GM12878 (cell line): ENCODE measurements at regions of chr16 and their contacts with region 1.

Region 1: GRCh38 chr16:84599521-84600202 is 18.2 kb downstream of the COTL1 start:
- DNase-seq: no peak
- ATAC-seq: peak; percentile 35
- H3K4me3 ChIP-seq: peak overlapping the region; percentile 69
- H3K27ac ChIP-seq: peak overlapping the region; percentile 100
- H3K4me1 ChIP-seq: peaks cover 79% of the 10 kb centered on the region
- H3K27me3 ChIP-seq: no peaks in the 10 kb centered on the region
- CTCF ChIP-seq: no peak
- EP300 ChIP-seq: peak in 1 of 2 experiments; percentile 18; a peak in 1 of 4 replicates
- POLR2A ChIP-seq: peak; percentile 64
- RAD21 ChIP-seq: no peak

Region 2: DNA sequence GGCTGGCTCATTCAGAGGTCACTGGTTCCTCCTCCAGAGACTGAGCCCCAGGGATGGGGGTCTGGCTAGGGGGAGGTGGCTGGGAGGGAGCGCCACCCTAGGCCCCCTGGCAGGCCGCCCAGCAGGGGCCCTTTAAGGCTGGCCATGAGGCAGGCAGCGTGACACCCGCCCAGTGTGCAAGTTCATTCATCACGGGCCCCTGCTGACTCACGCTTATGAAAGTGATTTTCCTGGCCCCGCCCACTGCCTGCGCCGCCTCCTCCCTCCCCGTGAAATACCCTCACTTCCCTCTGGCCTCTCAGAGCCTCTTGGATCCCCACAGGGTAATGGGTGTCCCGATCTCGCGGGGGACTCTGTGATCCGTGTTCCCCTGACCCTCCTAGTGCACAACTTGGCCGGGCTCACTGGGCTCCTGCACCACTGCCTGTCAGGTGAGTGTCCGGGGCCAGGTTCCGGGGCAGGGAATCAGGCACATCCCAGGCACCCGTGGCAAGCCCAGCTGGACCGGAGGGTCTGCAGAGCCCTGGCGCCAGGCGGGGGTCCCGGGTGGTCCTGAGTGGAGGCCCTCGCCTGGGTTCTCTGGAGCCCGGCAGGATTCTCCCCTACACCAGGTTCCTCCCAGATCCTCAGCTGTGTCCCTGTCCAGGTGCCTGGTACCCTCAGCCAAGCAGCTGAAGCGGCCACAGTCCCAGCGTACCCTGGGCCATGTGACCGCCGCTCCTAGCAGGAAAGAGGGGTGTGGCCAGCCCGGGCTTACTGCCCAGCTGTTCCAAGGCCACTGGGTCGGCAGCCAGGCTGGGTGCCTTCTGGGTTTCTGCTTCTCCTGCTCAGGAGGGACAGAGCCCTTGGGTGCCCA is 646.5 kb before region 1 on chr16 and contains the start of gene OSGIN1:
- CTCF ChIA-PET with region 1: no interaction called
- POLR2A ChIA-PET with region 1: no interaction called
- RAD21 ChIA-PET with region 1: no interaction called
- SMC1A ChIA-PET with region 1: no interaction called
- in situ Hi-C with region 1: loop called (anchors 10 kb)
- intact Hi-C with region 1: no loop called
- DNase-seq: peak; percentile 25
- ATAC-seq: peak; percentile 91
- H3K4me3 ChIP-seq: 0 out of 2 replicates have a peak within 1 kb of the TSS, but pooled peaks have one; percentile 16
- H3K27ac ChIP-seq: no peak within 1 kb of the TSS
- H3K4me1 ChIP-seq: peaks cover 3% of the 10 kb centered on the region; the same call in 1 of the 2 replicates
- H3K27me3 ChIP-seq: no peaks in the 10 kb centered on the region
- CTCF ChIP-seq: no peak
- EP300 ChIP-seq: no peak
- POLR2A ChIP-seq: peak; percentile 57
- RAD21 ChIP-seq: no peak
- polyA plus RNA-seq, gene OSGIN1: not detected

Region 3: DNA sequence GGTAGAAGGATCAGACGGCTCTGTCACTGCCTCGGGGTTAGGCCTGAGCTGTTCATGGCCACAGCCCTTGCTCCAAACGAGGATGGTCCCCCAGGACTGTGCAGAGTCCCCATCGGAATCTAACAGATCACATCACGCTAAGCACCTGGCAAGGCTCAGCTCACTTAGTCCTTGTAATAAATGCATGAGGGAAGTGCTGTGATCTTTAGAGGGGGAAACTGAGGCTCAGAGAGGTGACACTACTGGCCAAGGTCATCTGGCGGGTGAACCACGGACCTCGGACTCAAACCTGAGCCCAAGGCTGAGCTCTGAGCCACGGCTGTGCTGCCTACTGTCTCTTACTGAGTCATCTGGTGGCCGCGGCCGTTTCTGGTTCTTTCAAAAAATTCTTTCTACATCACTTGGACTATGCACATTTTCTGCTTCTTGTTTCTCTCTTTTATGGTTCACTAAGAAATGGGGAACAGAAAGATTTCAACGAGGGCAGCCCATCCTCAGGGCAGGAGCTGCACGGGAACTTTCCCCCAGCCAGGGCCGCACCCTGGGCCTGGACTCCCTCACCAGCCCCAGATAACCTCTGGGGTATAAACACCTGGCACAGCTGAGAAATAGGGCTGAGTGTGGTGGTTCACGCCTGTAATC is 37.4 kb before region 1 on chr16:
- CTCF ChIA-PET with region 1: interaction called, 4 read pairs
- POLR2A ChIA-PET with region 1: interaction called, 8 read pairs
- RAD21 ChIA-PET with region 1: interaction called, 11 read pairs
- SMC1A ChIA-PET with region 1: interaction called, 5 read pairs
- in situ Hi-C with region 1: no loop called
- intact Hi-C with region 1: no loop called
- DNase-seq: peak; percentile 64
- ATAC-seq: peak; percentile 92
- H3K4me3 ChIP-seq: no peak overlapping the region
- H3K27ac ChIP-seq: peak overlapping the region; percentile 66
- H3K4me1 ChIP-seq: peaks cover 21% of the 10 kb centered on the region
- H3K27me3 ChIP-seq: no peaks in the 10 kb centered on the region
- CTCF ChIP-seq: no peak
- EP300 ChIP-seq: peak in 1 of 2 experiments; percentile 6; a peak in 1 of 4 replicates
- POLR2A ChIP-seq: no peak; the same call in 1 of the 2 replicates
- RAD21 ChIP-seq: no peak

Region 4: DNA sequence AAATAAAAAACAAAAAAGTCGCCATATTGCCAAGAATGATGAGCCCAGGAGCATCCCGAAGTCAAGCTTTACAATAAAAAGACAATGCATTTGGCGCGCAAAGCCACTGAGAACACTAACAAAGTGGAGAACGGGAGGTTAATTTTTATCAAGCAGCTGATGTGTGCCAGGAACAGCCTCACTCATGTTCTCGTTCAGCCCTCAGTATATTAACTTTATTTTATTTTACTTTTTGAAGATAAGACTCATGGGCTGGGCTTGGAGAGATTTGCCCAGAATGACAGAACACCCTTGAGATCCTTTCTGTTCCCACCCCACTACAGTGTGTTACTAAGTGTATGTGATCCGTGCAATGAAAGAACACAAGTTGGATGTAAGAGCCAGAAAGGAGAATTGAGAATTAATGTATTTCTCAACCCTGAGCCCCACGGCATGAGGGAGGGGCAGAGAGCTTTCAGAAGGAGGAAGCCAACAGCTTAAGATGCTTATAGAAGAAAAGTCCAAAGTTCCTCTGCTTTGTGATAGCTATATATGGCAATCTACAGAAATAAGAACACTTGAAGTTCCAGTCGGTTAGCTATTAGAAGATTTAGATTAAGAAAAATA is 30.2 kb before region 1 on chr16:
- CTCF ChIA-PET with region 1: interaction called, 6 read pairs
- POLR2A ChIA-PET with region 1: interaction called, 3 read pairs
- RAD21 ChIA-PET with region 1: interaction called, 12 read pairs
- SMC1A ChIA-PET with region 1: interaction called, 11 read pairs
- in situ Hi-C with region 1: no loop called
- intact Hi-C with region 1: no loop called
- DNase-seq: peak; percentile 36
- ATAC-seq: peak; percentile 64
- H3K4me3 ChIP-seq: no peak overlapping the region
- H3K27ac ChIP-seq: no peak overlapping the region
- H3K4me1 ChIP-seq: peaks cover 7% of the 10 kb centered on the region; the same call in 1 of the 2 replicates
- H3K27me3 ChIP-seq: no peaks in the 10 kb centered on the region
- CTCF ChIP-seq: no peak
- EP300 ChIP-seq: no peak
- POLR2A ChIP-seq: no peak
- RAD21 ChIP-seq: no peak

Region 5: GRCh38 chr16:84585886-84586285 is 13.8 kb before region 1 on chr16:
- CTCF ChIA-PET with region 1: interaction called, 3 read pairs
- POLR2A ChIA-PET with region 1: interaction called, 5 read pairs
- RAD21 ChIA-PET with region 1: interaction called, 8 read pairs
- SMC1A ChIA-PET with region 1: interaction called, 15 read pairs
- in situ Hi-C with region 1: no loop called
- intact Hi-C with region 1: no loop called
- DNase-seq: no peak
- ATAC-seq: peak; percentile 96
- H3K4me3 ChIP-seq: peak overlapping the region; percentile 45; the same call in 1 of the 2 replicates
- H3K27ac ChIP-seq: peak overlapping the region; percentile 24
- H3K4me1 ChIP-seq: peaks cover 19% of the 10 kb centered on the region
- H3K27me3 ChIP-seq: no peaks in the 10 kb centered on the region
- CTCF ChIP-seq: no peak
- EP300 ChIP-seq: no peak
- POLR2A ChIP-seq: peak; percentile 53; the same call in 1 of the 2 replicates
- RAD21 ChIP-seq: no peak